Activated CD8-positive, alpha-beta T cell treated with anti-CD3 and anti-CD28 coated beads for 36 hours (primary cell): ENCODE measurements at regions of chr2 and their contacts with region 1.

Region 1: DNA sequence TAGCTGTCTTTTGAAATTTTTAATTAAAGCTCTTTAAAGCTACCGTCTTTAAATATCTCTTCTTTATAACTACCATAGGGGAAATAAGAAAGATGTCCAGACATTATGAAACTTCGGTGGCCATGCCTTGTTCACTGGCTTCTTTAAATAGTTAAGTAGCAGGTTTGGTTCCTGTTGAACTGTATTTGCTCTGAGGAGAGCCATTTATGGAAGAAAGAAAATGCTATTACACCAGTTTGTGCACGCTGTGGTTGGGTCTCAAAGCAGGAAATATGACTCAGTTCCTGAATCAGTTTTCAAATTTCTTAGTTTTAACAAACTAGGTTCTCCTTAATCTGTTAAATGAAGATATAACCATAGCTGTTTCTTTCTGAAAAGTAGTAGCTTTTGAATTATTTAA is 12.2 kb downstream of the ARPC2 start:
- DNase-seq: peak; percentile 68
- ATAC-seq: peak; percentile 77
- H3K4me3 Mint-ChIP-seq: peak overlapping the region; percentile 31
- H3K27ac Mint-ChIP-seq: peak overlapping the region; percentile 92
- H3K4me1 Mint-ChIP-seq: peaks cover 71% of the 10 kb centered on the region
- H3K27me3 Mint-ChIP-seq: no peaks in the 10 kb centered on the region
- CTCF ChIP-seq: no peak

Region 2: GRCh38 chr2:218186355-218186766 is 42.9 kb before region 1 on chr2:
- CTCF ChIA-PET with region 1: interaction called, 4 read pairs
- POLR2A ChIA-PET with region 1: interaction called, 3 read pairs
- intact Hi-C with region 1: loop called (anchors 5 kb)
- DNase-seq: peak; percentile 89
- ATAC-seq: peak; percentile 98
- H3K4me3 Mint-ChIP-seq: no peak overlapping the region
- H3K27ac Mint-ChIP-seq: peak overlapping the region; percentile 55
- H3K4me1 Mint-ChIP-seq: peaks cover 9% of the 10 kb centered on the region
- H3K27me3 Mint-ChIP-seq: no peaks in the 10 kb centered on the region
- CTCF ChIP-seq: peak; percentile 86

Region 3: DNA sequence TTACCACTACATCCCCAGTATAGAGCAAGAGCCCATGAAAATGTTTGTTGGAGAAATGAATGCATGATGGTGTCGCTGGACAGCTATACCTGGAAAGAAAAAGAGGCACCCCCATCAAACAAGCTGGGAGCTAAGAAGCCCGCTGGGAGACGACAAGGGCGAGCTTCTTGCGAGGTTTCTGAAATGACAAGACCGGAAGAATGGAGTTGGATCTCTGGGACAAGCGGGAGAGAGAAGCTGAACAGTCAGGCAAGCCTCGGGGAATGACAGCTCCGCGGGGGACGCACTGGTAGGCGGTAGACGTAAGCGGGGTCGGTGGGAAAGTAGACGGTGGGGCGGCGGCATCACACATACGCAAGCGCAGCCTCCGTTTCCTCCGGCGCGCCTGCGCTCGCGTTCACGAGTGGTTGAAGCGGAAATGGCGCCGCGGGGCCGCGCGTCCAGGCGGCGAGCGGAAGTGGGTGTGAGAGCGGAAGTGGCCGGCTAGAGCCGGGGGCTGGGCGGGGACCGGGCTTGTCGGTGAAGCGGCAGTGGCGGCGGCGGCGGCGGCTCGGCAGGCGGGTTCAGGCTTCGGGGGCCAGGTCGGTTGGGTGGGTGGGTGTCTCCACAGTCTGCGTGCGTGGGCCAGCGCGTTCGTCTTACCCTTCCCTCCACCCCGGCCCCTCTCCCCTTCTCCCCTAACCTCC is 12.4 kb before region 1 on chr2 and contains the start of gene ARPC2:
- CTCF ChIA-PET with region 1: interaction called, 50 read pairs
- POLR2A ChIA-PET with region 1: interaction called, 37 read pairs
- intact Hi-C with region 1: loop called (anchors 1 kb)
- DNase-seq: peak; percentile 96
- ATAC-seq: peak; percentile 69
- H3K4me3 Mint-ChIP-seq: peak within 1 kb of the TSS; percentile 93
- H3K27ac Mint-ChIP-seq: peak within 1 kb of the TSS; percentile 97
- H3K4me1 Mint-ChIP-seq: peaks cover 24% of the 10 kb centered on the region
- H3K27me3 Mint-ChIP-seq: no peaks in the 10 kb centered on the region
- CTCF ChIP-seq: no peak
- total RNA-seq, gene ARPC2: 636 to 644 TPM

Region 4: DNA sequence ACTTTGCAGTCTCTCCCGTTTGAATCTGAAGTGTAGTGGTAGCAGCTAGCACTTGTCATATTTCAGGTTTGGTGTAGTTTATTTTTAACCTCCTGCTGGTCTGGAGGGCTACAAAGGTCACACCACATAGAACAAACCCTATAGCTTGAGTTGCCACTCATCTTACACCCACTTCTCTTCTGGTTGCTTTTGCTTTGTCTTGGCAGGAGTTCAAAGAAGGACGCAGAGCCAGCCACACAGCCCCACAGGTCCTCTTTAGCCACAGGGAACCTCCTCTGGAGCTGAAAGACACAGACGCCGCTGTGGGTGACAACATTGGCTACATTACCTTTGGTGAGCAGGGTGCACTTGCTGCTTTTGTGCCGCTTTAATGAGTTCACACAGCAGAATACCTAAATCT is 16.0 kb after region 1 on chr2:
- CTCF ChIA-PET with region 1: interaction called, 10 read pairs
- POLR2A ChIA-PET with region 1: interaction called, 75 read pairs
- intact Hi-C with region 1: no loop called
- DNase-seq: peak; percentile 57
- ATAC-seq: peak; percentile 77
- H3K4me3 Mint-ChIP-seq: no peak overlapping the region
- H3K27ac Mint-ChIP-seq: peak overlapping the region; percentile 85
- H3K4me1 Mint-ChIP-seq: peaks cover 55% of the 10 kb centered on the region
- H3K27me3 Mint-ChIP-seq: no peaks in the 10 kb centered on the region
- CTCF ChIP-seq: no peak

Region 5: GRCh38 chr2:218257390-218257981 is 28.2 kb after region 1 on chr2:
- CTCF ChIA-PET with region 1: interaction called, 41 read pairs
- POLR2A ChIA-PET with region 1: interaction called, 8 read pairs
- intact Hi-C with region 1: loop called (anchors 5 kb)
- DNase-seq: peak; percentile 80
- ATAC-seq: peak; percentile 84
- H3K4me3 Mint-ChIP-seq: no peak overlapping the region
- H3K27ac Mint-ChIP-seq: peak overlapping the region; percentile 87
- H3K4me1 Mint-ChIP-seq: peaks cover 27% of the 10 kb centered on the region
- H3K27me3 Mint-ChIP-seq: no peaks in the 10 kb centered on the region
- CTCF ChIP-seq: peak; percentile 62